ENCODE measurements at regions of chr2 and their contacts with region 1.

Region 1: GRCh38 chr2:240991373-240992263 is 6.8 kb upstream of the SNED1 start:
- DNase-seq: peak; percentile 51
- H3K4me3 ChIP-seq: no peak overlapping the region
- H3K27ac ChIP-seq: no peak overlapping the region
- H3K4me1 ChIP-seq: peaks cover 14% of the 10 kb centered on the region
- H3K27me3 ChIP-seq: no peaks in the 10 kb centered on the region
- CTCF ChIP-seq: no peak

Region 2: GRCh38 chr2:240913810-240914644 is 77.6 kb before region 1 on chr2:
- CTCF ChIA-PET with region 1: interaction called, 3 read pairs
- POLR2A ChIA-PET with region 1: no interaction called
- intact Hi-C with region 1: loop called (anchors 1 kb)
- DNase-seq: peak; percentile 79
- H3K4me3 ChIP-seq: no peak overlapping the region
- H3K27ac ChIP-seq: no peak overlapping the region
- H3K4me1 ChIP-seq: peaks cover 24% of the 10 kb centered on the region
- H3K27me3 ChIP-seq: no peaks in the 10 kb centered on the region
- CTCF ChIP-seq: peak; percentile 99

Region 3: GRCh38 chr2:241018051-241018891 is 26.7 kb after region 1 on chr2:
- CTCF ChIA-PET with region 1: no interaction called
- POLR2A ChIA-PET with region 1: interaction called, 26 read pairs
- intact Hi-C with region 1: no loop called
- DNase-seq: no peak
- H3K4me3 ChIP-seq: no peak overlapping the region
- H3K27ac ChIP-seq: no peak overlapping the region
- H3K4me1 ChIP-seq: no peaks in the 10 kb centered on the region
- H3K27me3 ChIP-seq: no peaks in the 10 kb centered on the region
- CTCF ChIP-seq: no peak

Region 4: DNA sequence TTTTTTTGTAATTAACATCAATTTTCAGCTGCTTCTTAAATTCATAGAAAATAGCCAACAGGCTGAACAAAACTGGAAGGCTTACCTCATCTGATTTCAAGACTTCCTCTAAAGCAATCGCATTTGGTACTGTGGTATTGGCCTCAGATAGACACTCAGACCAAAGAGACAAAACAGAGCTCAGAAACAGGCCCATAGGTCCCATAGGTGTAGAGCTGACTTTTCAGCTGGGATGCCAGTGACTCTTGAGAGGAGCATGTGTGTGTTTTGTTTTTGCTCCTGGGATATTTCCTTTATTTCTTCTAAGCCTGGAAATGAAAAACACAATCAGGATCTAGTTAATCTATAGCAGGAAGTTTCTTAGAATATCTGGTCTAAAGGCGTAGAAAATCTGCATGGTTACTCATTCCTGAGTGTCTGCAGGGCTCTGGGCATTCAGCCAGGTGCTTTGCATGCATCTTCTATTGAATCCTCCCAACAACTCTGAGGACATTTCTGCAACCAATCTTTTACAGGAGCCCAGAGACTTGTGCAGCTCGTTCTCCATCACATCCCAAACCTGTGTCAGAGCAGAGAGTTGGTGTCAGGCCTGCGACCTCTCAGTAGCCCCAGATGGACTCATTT is 1068.7 kb after region 1 on chr2:
- CTCF ChIA-PET with region 1: no interaction called
- POLR2A ChIA-PET with region 1: no interaction called
- intact Hi-C with region 1: no loop called
- DNase-seq: peak; percentile 70
- H3K4me3 ChIP-seq: no peak overlapping the region
- H3K27ac ChIP-seq: no peak overlapping the region
- H3K4me1 ChIP-seq: no peaks in the 10 kb centered on the region
- H3K27me3 ChIP-seq: no peaks in the 10 kb centered on the region
- CTCF ChIP-seq: no peak

Measured in A673 (cell line).